ENCODE measurements at regions of chr10 and their contacts with region 1.

Region 1: GRCh38 chr10:17375936-17376584 is 78.3 kb downstream of the ST8SIA6 start:
- DNase-seq: peak; percentile 80
- ATAC-seq: peak; percentile 74
- H3K4me3 Mint-ChIP-seq: no peak overlapping the region
- H3K27ac Mint-ChIP-seq: no peak overlapping the region
- H3K4me1 Mint-ChIP-seq: peaks cover 32% of the 10 kb centered on the region
- H3K27me3 Mint-ChIP-seq: no peaks in the 10 kb centered on the region; the same call in 1 of the 2 replicates
- CTCF ChIP-seq: peak; percentile 79

Region 2: DNA sequence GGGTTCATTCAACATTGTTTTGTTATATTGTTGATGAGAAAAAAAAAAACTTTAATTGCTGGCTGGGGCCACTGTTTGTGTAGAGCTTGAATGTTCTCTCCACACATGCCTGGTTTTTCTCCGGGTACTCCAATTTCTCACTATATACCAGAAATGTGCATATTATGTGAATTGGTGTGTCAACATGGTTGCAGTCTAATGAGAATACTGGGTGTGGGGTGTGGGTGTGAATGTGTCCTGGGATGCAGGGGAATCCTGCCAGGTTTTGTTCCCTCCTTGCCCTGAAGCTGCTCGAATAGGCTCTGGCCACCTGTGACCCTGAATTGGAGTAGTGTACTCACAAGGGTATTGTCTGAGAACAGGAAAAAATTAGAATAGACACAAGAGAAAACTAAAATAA is 66.6 kb before region 1 on chr10:
- CTCF ChIA-PET with region 1: no interaction called
- POLR2A ChIA-PET with region 1: no interaction called
- DNase-seq: no peak
- ATAC-seq: no peak
- H3K4me3 Mint-ChIP-seq: no peak overlapping the region
- H3K27ac Mint-ChIP-seq: no peak overlapping the region
- H3K4me1 Mint-ChIP-seq: no peaks in the 10 kb centered on the region
- H3K27me3 Mint-ChIP-seq: no peaks in the 10 kb centered on the region
- CTCF ChIP-seq: no peak

Region 3: DNA sequence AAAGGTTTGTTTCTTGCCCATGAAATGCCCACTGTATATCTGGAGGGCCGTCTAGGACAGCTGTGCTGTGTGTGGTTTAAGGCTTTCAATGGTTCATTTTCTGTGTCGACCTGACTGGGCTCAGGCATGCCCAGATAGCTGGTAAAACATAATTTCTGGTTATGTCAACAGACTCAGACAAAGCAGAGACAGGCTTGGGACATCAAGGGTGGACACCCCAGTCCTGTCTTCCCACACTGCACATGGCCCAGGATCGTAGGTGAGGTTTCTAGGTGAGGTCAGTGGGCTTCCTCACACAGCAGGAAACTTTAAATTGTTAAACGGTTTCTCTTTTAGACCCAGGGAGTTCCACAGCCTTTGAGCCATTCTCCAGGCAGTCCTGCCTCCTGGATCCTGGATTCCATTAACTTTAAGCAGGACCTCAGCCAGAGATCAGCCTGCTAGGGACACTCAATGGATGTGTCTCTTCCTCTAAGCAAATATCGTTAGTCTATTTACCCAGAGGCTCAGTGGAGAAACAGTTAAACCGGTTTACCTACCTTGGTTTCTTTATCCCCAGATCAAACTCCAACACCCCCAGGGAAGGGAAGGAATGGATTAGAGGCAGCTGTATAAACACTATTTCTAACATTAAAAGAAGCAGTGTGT is 11.9 kb after region 1 on chr10:
- CTCF ChIA-PET with region 1: interaction called, 50 read pairs
- POLR2A ChIA-PET with region 1: no interaction called
- DNase-seq: no peak
- ATAC-seq: peak; percentile 89
- H3K4me3 Mint-ChIP-seq: no peak overlapping the region
- H3K27ac Mint-ChIP-seq: peak overlapping the region; percentile 79
- H3K4me1 Mint-ChIP-seq: peaks cover 37% of the 10 kb centered on the region
- H3K27me3 Mint-ChIP-seq: no peaks in the 10 kb centered on the region
- CTCF ChIP-seq: no peak

Region 4: DNA sequence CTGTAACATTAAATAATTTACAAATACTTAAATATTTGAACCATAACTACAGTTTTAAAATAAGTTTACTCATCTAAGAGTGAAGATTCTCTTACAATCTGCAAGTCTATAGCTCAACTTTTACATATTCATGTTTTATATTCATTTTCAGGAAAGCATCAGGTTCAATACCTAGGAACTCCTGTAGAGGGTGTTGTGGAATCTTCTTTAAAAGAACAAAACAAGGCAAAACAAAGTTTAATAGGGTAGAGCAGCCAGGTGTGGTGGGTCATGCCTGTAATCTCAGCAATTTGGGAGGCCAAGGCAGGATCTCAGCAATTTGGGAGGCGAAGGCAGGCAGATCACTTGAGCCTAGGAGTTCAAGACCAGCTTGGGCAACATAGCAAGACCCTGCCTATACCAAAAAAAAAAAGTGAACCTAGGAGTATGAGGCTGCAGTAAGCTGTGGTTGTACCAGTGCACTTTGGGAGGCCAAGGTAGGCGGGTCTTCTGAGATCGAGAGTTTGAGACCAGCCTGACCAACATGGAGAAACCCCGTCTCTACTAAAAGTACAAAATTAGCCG is 33.2 kb after region 1 on chr10:
- CTCF ChIA-PET with region 1: interaction called, 26 read pairs
- POLR2A ChIA-PET with region 1: no interaction called
- DNase-seq: no peak
- ATAC-seq: peak; percentile 46
- H3K4me3 Mint-ChIP-seq: no peak overlapping the region
- H3K27ac Mint-ChIP-seq: 0 out of 2 replicates have a peak overlapping the region, but pooled peaks have one; percentile 38
- H3K4me1 Mint-ChIP-seq: peaks cover 34% of the 10 kb centered on the region
- H3K27me3 Mint-ChIP-seq: no peaks in the 10 kb centered on the region
- CTCF ChIP-seq: 0 out of 2 replicates have a peak, but pooled peaks have one; percentile 20

Region 5: GRCh38 chr10:17423632-17424186 is 47.6 kb after region 1 on chr10:
- CTCF ChIA-PET with region 1: interaction called, 10 read pairs
- POLR2A ChIA-PET with region 1: no interaction called
- DNase-seq: no peak
- ATAC-seq: no peak
- H3K4me3 Mint-ChIP-seq: no peak overlapping the region
- H3K27ac Mint-ChIP-seq: no peak overlapping the region
- H3K4me1 Mint-ChIP-seq: peaks cover 8% of the 10 kb centered on the region
- H3K27me3 Mint-ChIP-seq: no peaks in the 10 kb centered on the region
- CTCF ChIP-seq: no peak

Measured in WTC11 (cell line).